ENCODE measurements at regions of chr3 and their contacts with region 1.

Region 1: DNA sequence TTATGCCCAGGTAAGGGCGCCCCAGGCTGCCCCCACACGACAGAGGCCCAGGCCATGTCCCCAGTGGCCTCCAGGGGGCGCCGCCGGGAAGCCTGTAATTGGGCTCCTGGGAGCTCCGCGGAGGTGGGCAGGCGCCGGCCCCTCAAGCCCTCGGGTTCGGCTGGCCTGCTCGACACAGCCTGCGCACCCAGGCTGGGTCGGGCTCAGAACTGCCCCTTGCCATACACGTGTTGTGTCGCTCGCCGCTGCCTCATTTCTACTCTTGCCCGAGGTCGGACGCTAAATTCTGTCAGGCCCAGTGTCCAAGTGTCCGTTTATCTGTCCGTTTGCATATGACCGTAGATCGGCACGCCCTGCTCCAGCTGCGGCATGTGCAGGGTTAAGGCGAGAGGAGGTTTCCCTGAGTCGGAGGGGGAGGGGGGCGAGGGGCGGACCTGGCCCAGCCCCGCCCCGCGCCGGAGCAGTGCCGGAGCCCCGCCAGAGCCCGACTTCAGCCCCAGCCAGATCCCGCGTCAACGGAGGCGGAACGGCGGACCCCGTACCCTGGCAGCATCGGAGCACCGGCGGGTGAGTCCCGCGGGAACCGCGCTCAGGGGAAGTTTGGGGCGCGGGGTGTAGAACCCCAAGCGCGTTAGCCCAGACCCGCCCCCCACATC is at the start of gene KLHDC8B:
- DNase-seq: peak; percentile 97
- H3K4me3 ChIP-seq: peak within 1 kb of the TSS; percentile 68 to 86 (median 78)
- H3K27ac ChIP-seq: peak within 1 kb of the TSS; percentile 84 to 93 (median 90)
- H3K4me1 ChIP-seq: peaks cover 48 to 64% (median 59%) of the 10 kb centered on the region in 4 donors
- H3K27me3 ChIP-seq: no peaks in the 10 kb centered on the region
- CTCF ChIP-seq: peak in 2 of 3 experiments; percentile 98 to 99
- EP300 ChIP-seq: no peak
- POLR2A ChIP-seq: peak; percentile 11
- total RNA-seq, gene KLHDC8B: 78.6 to 190 (median 91.2) TPM

Region 2: DNA sequence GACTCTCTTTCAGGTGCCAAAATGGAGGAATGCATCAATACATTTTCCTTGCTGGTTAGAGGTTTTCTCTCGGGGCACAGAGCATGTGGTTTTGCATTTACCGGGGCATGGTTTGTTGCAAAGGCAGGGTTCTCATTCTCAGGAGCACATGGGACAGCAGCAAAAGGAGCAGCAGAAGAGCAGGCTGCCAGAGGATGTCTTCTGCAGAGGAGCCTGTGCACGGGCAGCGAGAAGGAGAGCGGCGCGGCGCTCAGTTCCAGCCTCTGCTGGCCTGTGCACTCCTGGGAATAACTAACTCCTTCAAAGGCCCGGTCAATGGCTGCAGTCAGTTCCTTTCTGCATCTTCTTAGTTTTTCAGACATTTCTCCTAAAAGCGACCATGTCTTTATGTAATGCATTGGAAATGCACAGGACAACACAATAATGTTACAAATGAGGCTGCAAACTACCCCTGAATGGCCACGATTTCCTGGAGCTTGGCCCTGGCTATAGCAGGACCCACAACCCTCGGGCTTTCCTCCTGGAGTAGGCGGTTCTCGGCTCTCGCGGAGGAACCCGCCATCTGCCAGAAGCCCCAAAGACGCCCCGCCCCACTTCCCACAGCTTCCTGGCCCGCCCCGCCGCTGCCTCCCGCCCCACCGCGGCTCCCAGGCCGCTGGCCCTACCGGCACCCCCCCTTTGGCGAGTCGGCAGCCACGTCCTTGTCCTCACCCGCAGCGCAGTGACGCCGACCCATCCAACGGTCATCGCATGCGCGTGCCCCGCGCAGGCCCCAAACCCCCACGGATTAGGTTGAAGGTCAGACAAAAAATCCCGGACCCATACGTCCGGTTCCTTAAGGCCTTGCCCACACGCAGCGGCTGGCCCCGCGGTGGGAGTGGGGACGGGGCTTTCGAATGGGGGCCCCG is 105.5 kb after region 1 on chr3 and contains the start of gene C3orf62:
- intact Hi-C with region 1: loop called (anchors 2 kb)
- DNase-seq: peak; percentile 96
- H3K4me3 ChIP-seq: peak within 1 kb of the TSS; percentile 58 to 61 (median 60)
- H3K27ac ChIP-seq: peak within 1 kb of the TSS; percentile 91 to 97 (median 92)
- H3K4me1 ChIP-seq: peaks cover 31 to 52% (median 38%) of the 10 kb centered on the region in 4 donors
- H3K27me3 ChIP-seq: no peaks in the 10 kb centered on the region
- CTCF ChIP-seq: no peak
- EP300 ChIP-seq: no peak
- POLR2A ChIP-seq: no peak
- total RNA-seq, gene C3orf62: 3.1 to 8.7 (median 5.8) TPM

Region 3: DNA sequence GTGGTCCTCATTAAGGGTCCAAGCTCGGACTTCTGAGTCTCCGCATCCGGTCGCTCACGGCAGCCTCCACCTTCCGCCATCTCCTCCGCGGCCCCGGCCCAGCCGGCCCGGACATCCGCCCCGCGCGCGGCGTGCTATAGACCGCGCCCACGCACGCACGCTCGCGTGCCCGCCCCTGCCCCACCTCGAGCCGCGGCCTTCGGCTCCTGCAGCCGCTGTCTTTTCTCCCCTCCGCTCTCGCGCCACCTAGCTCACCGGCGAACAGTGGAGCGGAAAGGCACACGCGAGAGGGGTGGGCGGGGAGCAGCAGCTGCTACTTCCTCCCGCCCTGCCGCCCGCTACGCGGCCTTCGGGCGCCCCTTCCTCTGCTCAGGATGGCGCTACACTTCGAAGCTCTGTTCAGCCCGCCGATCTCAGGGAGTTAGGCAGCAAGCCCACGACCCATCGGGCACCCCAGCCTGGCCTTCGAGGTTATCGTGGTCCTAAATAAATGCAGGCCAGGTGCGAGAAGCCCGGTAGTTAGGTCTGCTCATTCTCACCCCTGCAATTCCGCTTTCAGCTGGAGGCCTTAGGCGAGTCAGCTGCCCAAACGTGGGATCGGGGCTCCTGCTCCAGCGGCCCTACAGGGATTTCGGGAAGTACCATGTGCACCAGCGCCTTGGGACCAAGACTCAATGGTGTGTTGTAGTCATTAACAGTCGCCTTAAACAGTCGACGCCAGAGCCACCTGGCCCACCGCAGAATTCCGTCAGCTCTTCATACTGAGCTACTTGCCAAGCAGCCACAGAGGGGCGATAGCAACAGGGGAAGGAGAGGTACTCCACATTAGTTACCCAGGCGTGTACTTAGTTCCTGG is 168.9 kb after region 1 on chr3 and contains the start of gene USP4:
- intact Hi-C with region 1: loop called (anchors 5 kb)
- DNase-seq: peak; percentile 94
- H3K4me3 ChIP-seq: peak within 1 kb of the TSS; percentile 62 to 87 (median 83)
- H3K27ac ChIP-seq: peak within 1 kb of the TSS; percentile 90 to 97 (median 97)
- H3K4me1 ChIP-seq: peaks cover 37 to 54% (median 51%) of the 10 kb centered on the region in 4 donors
- H3K27me3 ChIP-seq: no peaks in the 10 kb centered on the region
- CTCF ChIP-seq: peak; percentile 35 to 62 (median 46)
- EP300 ChIP-seq: no peak
- POLR2A ChIP-seq: peak; percentile 16
- total RNA-seq, gene USP4: 17.9 to 35.7 (median 24.3) TPM

Region 4: GRCh38 chr3:49445381-49445780 is 274.1 kb after region 1 on chr3:
- intact Hi-C with region 1: loop called (anchors 5 kb)
- DNase-seq: no peak
- H3K4me3 ChIP-seq: no peak overlapping the region
- H3K27ac ChIP-seq: no peak overlapping the region
- H3K4me1 ChIP-seq: peaks cover 8 to 19% (median 14%) of the 10 kb centered on the region in 4 donors
- H3K27me3 ChIP-seq: no peaks in the 10 kb centered on the region
- CTCF ChIP-seq: no peak
- EP300 ChIP-seq: no peak
- POLR2A ChIP-seq: no peak